ENCODE measurements at regions of chr11 and their contacts with region 1.

Region 1: DNA sequence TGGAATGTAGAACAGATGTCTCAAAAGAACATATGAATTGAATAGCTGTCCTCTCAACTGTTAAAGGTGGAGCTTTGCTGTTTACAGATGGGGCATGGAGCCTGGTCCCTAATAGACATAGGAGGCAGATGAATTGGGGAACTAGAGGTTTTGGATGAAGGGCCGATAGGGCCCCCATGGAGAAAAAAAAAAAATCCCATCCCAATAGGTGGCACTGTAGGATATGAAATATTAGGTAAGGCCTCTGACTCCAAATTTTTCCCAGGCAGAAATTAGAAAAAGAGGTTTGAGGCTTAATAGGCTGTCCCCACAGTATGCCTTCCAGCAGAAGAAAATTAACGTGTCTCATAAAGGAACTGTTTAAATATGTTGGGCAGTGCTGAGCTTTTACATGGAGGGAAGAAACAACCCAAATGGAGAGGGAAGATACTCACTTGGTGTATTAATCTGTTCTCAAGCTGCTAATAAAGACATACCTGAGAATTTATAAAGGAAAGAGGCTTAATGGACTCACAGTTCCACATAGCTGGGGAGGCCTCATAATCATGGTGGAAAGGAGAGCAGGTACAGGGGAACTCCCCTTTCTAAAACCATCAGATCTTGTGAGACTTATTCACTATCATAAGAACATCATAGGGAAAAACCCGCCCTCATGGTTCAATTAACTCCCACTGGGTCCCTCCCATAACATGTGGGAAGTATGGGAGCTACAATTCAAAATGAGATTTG is 30.1 kb upstream of the TMEM45B start:
- DNase-seq: peak in 1 of 2 experiments; percentile 61
- H3K4me3 ChIP-seq: no peak overlapping the region
- H3K27ac ChIP-seq: no peak overlapping the region
- H3K4me1 ChIP-seq: peaks cover 18% of the 10 kb centered on the region
- H3K27me3 ChIP-seq: no peaks in the 10 kb centered on the region
- CTCF ChIP-seq: peak; percentile 73

Region 2: GRCh38 chr11:129743111-129743815 is 42.3 kb before region 1 on chr11:
- CTCF ChIA-PET with region 1: no interaction called
- POLR2A ChIA-PET with region 1: no interaction called
- intact Hi-C with region 1: no loop called
- DNase-seq: no peak
- H3K4me3 ChIP-seq: no peak overlapping the region
- H3K27ac ChIP-seq: no peak overlapping the region
- H3K4me1 ChIP-seq: peaks cover 20% of the 10 kb centered on the region
- H3K27me3 ChIP-seq: no peaks in the 10 kb centered on the region
- CTCF ChIP-seq: no peak

Region 3: DNA sequence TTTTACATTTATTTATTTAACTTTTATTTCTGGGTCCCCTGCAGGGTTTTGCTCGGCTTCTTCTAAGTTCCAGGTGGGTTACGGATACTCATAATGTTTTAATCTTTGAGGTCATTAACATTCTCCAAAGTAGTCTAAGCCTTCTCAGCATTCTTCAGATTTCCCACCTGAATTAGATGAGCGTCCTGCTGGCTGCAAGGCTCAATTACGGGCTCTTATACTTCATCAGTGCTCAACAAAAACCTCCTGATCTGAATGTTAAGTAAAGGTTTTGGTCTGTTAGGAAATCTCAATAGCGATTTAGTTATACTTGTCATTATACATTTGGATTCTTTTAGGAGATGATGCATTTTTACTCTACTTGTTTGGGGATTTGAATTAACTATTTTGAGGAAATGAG is 137.1 kb after region 1 on chr11:
- CTCF ChIA-PET with region 1: no interaction called
- POLR2A ChIA-PET with region 1: no interaction called
- intact Hi-C with region 1: loop called (anchors 2 kb)
- DNase-seq: no peak
- H3K4me3 ChIP-seq: no peak overlapping the region
- H3K27ac ChIP-seq: no peak overlapping the region
- H3K4me1 ChIP-seq: no peaks in the 10 kb centered on the region
- H3K27me3 ChIP-seq: no peaks in the 10 kb centered on the region
- CTCF ChIP-seq: no peak